ENCODE measurements at regions of chr9 and their contacts with region 1.

Region 1: GRCh38 chr9:36023260-36024048 is 13.3 kb upstream of the RECK start:
- H3K4me3 ChIP-seq: no peak overlapping the region
- H3K27ac ChIP-seq: no peak overlapping the region
- H3K4me1 ChIP-seq: no peaks in the 10 kb centered on the region
- CTCF ChIP-seq: peak; percentile 63; the same call in 1 of the 2 replicates

Region 2: DNA sequence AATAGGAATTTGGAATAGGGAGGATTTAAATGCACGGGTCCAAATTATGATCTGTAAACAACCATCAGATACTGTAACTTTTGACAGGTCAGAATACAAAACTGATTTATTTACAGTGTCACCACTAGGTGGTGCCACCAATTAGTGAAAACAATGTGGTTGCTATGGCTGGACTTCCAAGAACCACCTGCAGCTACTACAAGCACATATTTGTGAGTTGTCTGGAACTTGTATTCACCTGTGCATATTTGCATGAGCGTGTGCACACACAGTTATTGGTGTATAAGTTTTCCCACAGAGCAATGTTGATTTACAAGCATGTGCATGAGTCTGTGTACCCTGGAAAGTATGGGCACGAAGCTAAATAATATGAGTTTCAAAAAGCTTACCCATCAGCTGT is 120.4 kb before region 1 on chr9:
- CTCF ChIA-PET with region 1: interaction called, 25 read pairs
- POLR2A ChIA-PET with region 1: interaction called, 3 read pairs
- H3K4me3 ChIP-seq: no peak overlapping the region
- H3K27ac ChIP-seq: no peak overlapping the region
- H3K4me1 ChIP-seq: peaks cover 5% of the 10 kb centered on the region
- CTCF ChIP-seq: 0 out of 2 replicates have a peak, but pooled peaks have one; percentile 19

Region 3: DNA sequence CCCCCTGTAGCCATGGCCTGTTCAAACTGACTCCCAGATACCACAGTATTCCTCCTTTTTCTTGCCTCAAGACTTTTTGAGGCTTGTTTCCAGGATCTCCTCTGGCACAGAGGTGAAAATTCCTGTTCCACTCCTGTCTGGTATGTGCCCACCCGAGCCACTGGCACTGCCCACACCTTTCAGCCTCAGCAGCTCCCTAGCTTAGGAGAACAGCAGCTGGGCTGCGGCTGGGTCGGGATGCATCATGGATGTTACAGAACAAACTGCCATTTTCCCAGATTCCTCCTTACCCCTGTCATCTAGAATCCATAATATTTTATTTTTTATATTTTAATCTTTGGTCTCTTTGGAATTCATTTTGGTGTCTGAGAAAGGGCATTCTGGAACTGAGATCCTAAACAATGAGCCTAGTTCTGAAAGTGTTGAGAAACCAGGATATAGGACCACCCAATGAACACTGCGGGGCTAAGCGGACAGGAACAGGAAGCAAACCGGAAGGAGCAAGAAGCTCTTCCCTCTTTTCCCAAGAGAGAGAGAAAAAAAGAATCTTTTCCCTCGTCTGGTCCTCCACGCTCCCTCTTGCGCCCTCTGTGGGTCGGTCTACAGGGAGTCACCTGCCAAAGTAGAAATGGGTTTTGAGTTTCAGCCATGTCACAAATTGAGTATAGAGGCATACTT is 78.0 kb before region 1 on chr9:
- CTCF ChIA-PET with region 1: interaction called, 12 read pairs
- POLR2A ChIA-PET with region 1: interaction called, 3 read pairs
- H3K4me3 ChIP-seq: peak overlapping the region; percentile 23
- H3K27ac ChIP-seq: no peak overlapping the region
- H3K4me1 ChIP-seq: no peaks in the 10 kb centered on the region
- CTCF ChIP-seq: peak; percentile 41

Region 4: DNA sequence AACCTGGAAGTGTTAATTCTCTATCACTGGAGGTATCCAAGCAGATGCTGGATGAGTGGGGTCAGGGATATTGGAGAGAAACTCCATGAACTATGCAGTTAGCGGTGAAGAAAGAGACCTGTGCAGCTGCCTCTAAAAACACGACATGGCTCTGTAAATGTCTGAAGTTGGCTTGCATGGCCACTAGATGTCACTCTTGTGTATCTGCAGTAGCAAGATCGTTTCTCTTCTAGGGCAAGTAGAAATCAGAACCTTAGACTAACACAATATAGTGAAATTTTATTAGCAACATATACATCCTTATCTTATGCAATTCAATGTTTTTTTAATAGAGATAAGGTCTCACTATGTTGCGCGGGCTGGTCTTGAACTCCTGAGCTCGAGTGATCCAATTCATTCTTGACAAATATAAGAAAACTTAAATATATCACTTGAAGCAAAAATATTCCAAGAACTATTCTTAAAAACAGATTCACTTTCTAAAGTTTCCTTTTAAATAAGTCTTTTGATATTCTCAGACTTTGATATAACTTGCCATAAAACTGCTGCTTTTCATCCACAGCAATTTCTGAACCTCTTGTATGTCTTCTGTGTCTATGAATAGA is 68.4 kb before region 1 on chr9:
- CTCF ChIA-PET with region 1: interaction called, 99 read pairs
- POLR2A ChIA-PET with region 1: no interaction called
- H3K4me3 ChIP-seq: no peak overlapping the region
- H3K27ac ChIP-seq: no peak overlapping the region
- H3K4me1 ChIP-seq: no peaks in the 10 kb centered on the region
- CTCF ChIP-seq: peak; percentile 51; the same call in 1 of the 2 replicates

Region 5: GRCh38 chr9:35996358-35996975 is 27.0 kb before region 1 on chr9:
- CTCF ChIA-PET with region 1: interaction called, 13 read pairs
- POLR2A ChIA-PET with region 1: no interaction called
- H3K4me3 ChIP-seq: no peak overlapping the region
- H3K27ac ChIP-seq: no peak overlapping the region
- H3K4me1 ChIP-seq: no peaks in the 10 kb centered on the region
- CTCF ChIP-seq: no peak

Region 6: DNA sequence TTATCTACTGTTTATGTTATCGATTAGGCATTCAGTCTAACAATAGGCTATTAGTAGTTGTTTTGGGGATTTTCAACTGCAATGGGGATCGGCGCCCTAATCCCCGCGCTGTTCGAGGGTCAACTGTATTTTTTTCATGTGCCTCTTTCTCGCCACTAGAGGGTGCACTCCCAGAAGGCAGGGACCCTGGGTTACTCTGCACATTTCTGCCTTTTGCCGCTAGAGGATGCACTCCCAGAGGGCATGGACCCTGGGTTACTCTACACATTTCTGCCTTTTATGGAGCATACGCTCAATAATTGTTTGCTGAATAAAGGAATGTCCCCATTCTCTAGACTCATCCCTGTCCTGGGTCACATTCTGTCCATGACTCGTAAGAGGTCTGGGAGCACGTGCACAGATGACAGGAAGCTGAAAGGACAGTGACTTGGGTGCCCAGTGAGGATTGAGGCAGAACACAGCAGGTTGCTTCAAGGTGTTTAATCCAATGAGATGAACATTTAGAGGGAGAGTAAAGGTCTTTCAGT is 14.6 kb before region 1 on chr9:
- CTCF ChIA-PET with region 1: interaction called, 104 read pairs
- POLR2A ChIA-PET with region 1: no interaction called
- H3K4me3 ChIP-seq: no peak overlapping the region
- H3K27ac ChIP-seq: no peak overlapping the region
- H3K4me1 ChIP-seq: no peaks in the 10 kb centered on the region
- CTCF ChIP-seq: 0 out of 2 replicates have a peak, but pooled peaks have one; percentile 16

Region 7: DNA sequence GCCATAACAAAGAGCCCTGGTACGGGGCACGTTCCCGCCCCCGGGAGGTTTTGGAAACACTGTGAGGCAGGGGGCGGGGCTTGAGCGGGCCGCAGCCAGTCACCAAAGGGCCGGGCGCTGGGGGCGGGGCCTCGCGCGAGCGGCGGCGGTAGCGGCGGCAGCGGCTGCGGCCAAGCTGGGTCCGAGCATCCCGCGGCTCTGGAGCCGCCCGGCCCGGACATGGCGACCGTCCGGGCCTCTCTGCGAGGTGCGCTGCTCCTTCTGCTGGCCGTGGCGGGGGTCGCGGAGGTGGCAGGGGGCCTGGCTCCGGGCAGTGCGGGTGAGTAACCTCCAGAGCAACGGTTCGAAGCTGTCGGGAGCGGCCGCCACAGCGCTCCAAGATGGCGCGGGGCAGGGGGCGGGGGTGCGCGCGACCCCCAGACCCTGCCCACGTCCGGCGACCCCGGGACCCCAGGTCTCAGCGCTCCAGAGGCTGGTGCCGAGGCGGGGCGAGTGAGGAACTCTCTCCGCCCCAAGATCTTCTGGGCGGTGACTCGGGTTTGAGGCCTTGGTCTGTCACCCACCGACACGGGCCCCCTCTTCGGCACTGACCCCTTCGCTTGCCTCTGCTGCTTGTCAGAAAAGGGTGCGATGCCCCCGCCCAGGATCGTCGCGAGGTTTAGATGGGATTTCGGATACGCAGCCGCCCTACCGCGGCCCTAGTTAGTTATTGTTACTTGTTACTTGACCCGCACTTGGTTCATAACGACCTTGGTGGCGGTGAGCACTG is 13.5 kb after region 1 on chr9 and contains the start of gene RECK:
- CTCF ChIA-PET with region 1: interaction called, 58 read pairs
- POLR2A ChIA-PET with region 1: interaction called, 6 read pairs
- H3K4me3 ChIP-seq: peak within 1 kb of the TSS; percentile 94
- H3K27ac ChIP-seq: peak within 1 kb of the TSS; percentile 55
- H3K4me1 ChIP-seq: peaks cover 6% of the 10 kb centered on the region
- CTCF ChIP-seq: no peak

Region 8: GRCh38 chr9:36127652-36128244 is 104.3 kb after region 1 on chr9:
- CTCF ChIA-PET with region 1: no interaction called
- POLR2A ChIA-PET with region 1: no interaction called
- H3K4me3 ChIP-seq: no peak overlapping the region
- H3K27ac ChIP-seq: no peak overlapping the region
- H3K4me1 ChIP-seq: no peaks in the 10 kb centered on the region
- CTCF ChIP-seq: no peak

Region 9: GRCh38 chr9:36148311-36149051 is 125.0 kb after region 1 on chr9:
- CTCF ChIA-PET with region 1: no interaction called
- POLR2A ChIA-PET with region 1: no interaction called
- H3K4me3 ChIP-seq: no peak overlapping the region
- H3K27ac ChIP-seq: no peak overlapping the region
- H3K4me1 ChIP-seq: peaks cover 3% of the 10 kb centered on the region; the same call in 1 of the 2 replicates
- CTCF ChIP-seq: no peak